GM12878 (cell line): ENCODE measurements at regions of chr4 and their contacts with region 1.

Region 1: DNA sequence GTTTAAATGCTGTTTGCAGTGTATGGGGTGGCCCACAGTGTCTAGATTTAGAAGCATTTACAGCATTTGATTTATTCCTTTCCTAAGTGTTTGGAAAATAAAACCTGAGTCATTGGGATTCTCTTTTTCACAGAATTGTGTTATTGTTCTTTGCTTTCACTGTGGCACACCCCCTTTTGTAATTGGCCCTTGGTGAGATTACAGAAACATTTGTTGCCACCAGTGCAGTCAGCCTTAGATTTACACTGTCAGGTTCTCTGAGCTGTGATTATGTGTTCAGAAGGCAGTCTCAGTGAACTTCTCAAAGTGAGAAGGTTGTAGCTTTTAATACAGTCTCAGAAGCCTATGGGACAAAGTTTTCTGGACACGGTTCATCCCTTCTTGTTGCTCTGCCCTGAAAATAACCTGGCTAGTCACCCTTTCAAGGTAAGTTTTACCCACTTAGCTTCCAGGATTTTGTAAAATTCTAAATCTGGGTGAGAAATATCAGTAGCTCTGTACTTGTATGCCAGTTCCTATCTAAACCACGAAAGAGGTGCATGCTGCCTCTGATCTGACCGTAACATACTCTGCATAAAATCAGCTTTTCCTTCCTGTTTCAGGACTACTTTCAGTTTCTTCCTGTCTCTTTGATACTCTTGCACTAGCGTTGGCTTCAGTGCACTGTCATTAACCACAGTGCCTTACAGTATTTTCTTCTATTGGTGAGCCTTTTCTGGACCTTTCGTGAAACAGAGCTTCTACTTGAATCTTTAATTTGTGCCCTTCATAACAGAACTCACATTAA is 12.6 kb downstream of the RUFY3 start:
- DNase-seq: peak; percentile 74
- ATAC-seq: peak; percentile 92
- H3K4me3 ChIP-seq: peak overlapping the region; percentile 62
- H3K27ac ChIP-seq: peak overlapping the region; percentile 49
- H3K4me1 ChIP-seq: peaks cover 30% of the 10 kb centered on the region
- H3K27me3 ChIP-seq: no peaks in the 10 kb centered on the region
- CTCF ChIP-seq: no peak
- EP300 ChIP-seq: 0 out of 4 replicates have a peak, but pooled peaks have one; percentile 1 to 14
- POLR2A ChIP-seq: no peak; the same call in 1 of the 2 replicates
- RAD21 ChIP-seq: no peak

Region 2: DNA sequence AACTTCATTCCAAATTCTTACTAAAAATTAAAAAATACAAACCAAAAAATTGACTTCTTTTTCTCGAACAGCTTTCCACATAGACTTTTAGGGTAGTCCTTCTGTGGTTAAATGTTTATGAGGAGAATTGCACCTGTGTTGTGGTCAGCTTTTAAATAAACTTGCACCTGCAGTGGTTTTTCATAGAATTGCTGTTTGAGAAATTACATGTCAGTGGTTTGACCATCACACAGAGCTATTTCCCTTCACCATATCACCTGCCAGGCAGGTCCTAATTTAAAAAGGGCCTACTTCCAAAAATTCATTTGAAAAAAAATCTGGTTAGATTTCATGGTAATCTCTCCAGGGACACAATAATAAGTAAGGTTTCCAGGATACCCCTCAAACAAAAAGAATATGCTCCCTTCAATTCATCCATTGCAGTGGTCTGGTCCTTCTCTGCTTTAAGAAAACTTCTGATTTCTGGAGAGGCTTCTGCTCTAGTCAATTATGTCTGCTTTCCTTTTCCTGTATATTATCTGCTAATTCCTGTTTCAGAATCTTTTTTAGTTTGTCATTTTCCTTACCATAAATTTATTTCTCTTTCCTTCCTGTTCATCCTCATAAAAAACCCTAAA is 55.9 kb before region 1 on chr4:
- CTCF ChIA-PET with region 1: interaction called, 15 read pairs
- POLR2A ChIA-PET with region 1: interaction called, 7 read pairs
- RAD21 ChIA-PET with region 1: interaction called, 14 read pairs
- SMC1A ChIA-PET with region 1: interaction called, 7 read pairs
- in situ Hi-C with region 1: no loop called
- intact Hi-C with region 1: no loop called
- DNase-seq: peak; percentile 63
- ATAC-seq: peak; percentile 79
- H3K4me3 ChIP-seq: 0 out of 2 replicates have a peak overlapping the region, but pooled peaks have one; percentile 17
- H3K27ac ChIP-seq: peak overlapping the region; percentile 65
- H3K4me1 ChIP-seq: peaks cover 55% of the 10 kb centered on the region
- H3K27me3 ChIP-seq: no peaks in the 10 kb centered on the region
- CTCF ChIP-seq: no peak
- EP300 ChIP-seq: peak; percentile 87 to 98; a peak in 3 of 4 replicates
- POLR2A ChIP-seq: no peak
- RAD21 ChIP-seq: no peak

Region 3: DNA sequence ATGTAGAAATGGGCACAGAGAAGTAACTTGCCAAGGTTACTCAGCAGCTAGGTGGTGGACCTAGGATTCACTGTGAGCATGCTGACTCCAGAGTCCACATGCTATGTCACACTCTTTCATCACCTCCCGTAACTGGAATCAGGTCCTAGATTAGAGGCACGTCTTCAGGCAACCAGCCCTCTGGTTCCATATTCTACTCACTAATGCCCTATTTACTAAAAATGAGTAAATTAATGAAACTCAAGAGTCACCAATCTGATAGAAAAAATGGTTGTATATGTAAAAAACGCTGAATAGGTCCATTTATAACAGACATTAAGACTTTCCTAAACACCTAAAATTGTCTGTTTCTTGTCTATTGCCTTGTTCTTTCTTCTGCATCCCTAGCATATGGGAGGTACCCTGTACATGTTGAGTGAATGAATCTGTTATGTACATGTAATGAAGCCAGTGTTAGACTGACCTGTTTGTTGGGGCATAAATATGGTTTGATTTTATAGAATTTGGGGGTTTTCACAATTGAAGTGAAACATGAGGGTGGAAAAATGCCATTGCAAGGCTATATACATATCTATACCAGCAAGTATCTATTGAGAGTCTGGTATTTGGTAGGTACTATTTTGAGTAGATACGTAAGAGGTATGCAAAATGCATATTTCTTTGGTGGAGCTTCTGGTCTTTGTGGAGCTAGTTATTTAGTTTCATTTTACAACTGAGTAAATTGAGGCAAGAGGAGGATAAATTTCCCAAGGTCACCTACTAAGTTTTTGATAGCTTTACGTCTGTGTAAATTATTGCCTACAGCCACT is 20.1 kb before region 1 on chr4:
- CTCF ChIA-PET with region 1: interaction called, 77 read pairs
- POLR2A ChIA-PET with region 1: interaction called, 5 read pairs
- RAD21 ChIA-PET with region 1: interaction called, 43 read pairs
- SMC1A ChIA-PET with region 1: interaction called, 65 read pairs
- in situ Hi-C with region 1: no loop called
- intact Hi-C with region 1: no loop called
- DNase-seq: no peak
- ATAC-seq: peak; percentile 77
- H3K4me3 ChIP-seq: peak overlapping the region; percentile 13; the same call in 1 of the 2 replicates
- H3K27ac ChIP-seq: peak overlapping the region; percentile 72
- H3K4me1 ChIP-seq: peaks cover 33% of the 10 kb centered on the region
- H3K27me3 ChIP-seq: no peaks in the 10 kb centered on the region
- CTCF ChIP-seq: no peak
- EP300 ChIP-seq: no peak
- POLR2A ChIP-seq: no peak
- RAD21 ChIP-seq: no peak

Region 4: DNA sequence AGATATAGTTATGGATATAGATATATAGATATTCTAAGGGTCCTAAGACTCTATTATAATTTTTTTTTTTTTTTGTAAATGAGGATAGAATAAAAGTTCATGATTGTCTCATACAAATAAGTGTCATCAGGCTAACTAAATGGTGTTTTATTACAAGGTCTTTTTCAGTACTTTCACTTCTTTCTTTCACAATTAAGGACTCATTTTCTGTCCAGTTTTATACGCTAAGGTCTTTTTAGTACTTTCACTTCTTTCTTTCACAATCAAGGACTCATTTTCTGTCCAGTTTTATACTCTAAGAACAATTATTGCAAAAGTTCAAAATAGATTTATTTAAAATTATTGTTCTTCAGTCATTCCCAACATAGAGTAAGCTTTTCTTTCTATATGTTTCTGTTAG is 20.1 kb after region 1 on chr4:
- CTCF ChIA-PET with region 1: interaction called, 55 read pairs
- POLR2A ChIA-PET with region 1: interaction called, 24 read pairs
- RAD21 ChIA-PET with region 1: interaction called, 86 read pairs
- SMC1A ChIA-PET with region 1: interaction called, 204 read pairs
- in situ Hi-C with region 1: no loop called
- intact Hi-C with region 1: loop called (anchors 2 kb)
- DNase-seq: no peak
- ATAC-seq: peak; percentile 82
- H3K4me3 ChIP-seq: peak overlapping the region; percentile 59; the same call in 1 of the 2 replicates
- H3K27ac ChIP-seq: peak overlapping the region; percentile 79
- H3K4me1 ChIP-seq: peaks cover 36% of the 10 kb centered on the region
- H3K27me3 ChIP-seq: no peaks in the 10 kb centered on the region
- CTCF ChIP-seq: no peak
- EP300 ChIP-seq: peak; percentile 49 to 85; a peak in 3 of 4 replicates
- POLR2A ChIP-seq: no peak
- RAD21 ChIP-seq: no peak

Region 5: GRCh38 chr4:70801265-70801809 is 67.0 kb after region 1 on chr4:
- CTCF ChIA-PET with region 1: interaction called, 5 read pairs
- POLR2A ChIA-PET with region 1: interaction called, 4 read pairs
- RAD21 ChIA-PET with region 1: no interaction called
- SMC1A ChIA-PET with region 1: interaction called, 18 read pairs
- in situ Hi-C with region 1: no loop called
- intact Hi-C with region 1: no loop called
- DNase-seq: no peak
- ATAC-seq: peak; percentile 53
- H3K4me3 ChIP-seq: no peak overlapping the region
- H3K27ac ChIP-seq: no peak overlapping the region
- H3K4me1 ChIP-seq: no peaks in the 10 kb centered on the region
- H3K27me3 ChIP-seq: no peaks in the 10 kb centered on the region
- CTCF ChIP-seq: no peak
- EP300 ChIP-seq: no peak
- POLR2A ChIP-seq: no peak
- RAD21 ChIP-seq: no peak

Region 6: DNA sequence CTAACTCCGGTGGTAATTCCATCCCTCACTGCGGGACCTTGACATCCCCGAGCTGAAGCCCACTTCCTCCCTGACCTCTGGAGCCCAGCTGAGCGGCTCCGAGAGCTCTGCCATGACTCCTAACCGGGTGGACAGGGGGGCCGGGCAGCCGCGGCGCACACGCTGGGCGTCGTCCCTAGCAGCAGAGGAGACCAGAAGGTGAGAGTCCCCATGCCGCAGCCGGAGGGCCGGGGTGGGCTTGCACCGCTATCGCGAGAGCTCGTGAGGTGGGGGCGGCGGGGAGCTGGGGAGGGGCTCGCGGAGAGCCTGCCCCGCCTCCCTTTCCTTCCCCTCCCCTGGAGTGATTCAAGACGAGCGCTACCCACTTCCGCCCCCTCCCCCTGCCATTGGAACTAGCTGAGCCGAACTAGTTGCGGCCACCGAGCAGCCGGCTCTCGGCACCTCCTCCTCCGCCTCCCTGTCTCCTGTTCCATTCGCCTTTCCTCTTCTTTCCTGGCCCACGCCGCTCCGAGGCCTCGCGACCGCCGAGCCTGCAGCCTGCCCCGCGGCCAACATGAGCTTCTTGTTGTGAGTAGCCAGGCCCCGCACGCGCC is 167.7 kb after region 1 on chr4 and contains the start of gene MOB1B:
- CTCF ChIA-PET with region 1: interaction called, 11 read pairs
- POLR2A ChIA-PET with region 1: no interaction called
- RAD21 ChIA-PET with region 1: interaction called, 13 read pairs
- SMC1A ChIA-PET with region 1: interaction called, 6 read pairs
- in situ Hi-C with region 1: no loop called
- intact Hi-C with region 1: no loop called
- DNase-seq: peak; percentile 34
- ATAC-seq: peak; percentile 94
- H3K4me3 ChIP-seq: peak within 1 kb of the TSS; percentile 99
- H3K27ac ChIP-seq: peak within 1 kb of the TSS; percentile 53
- H3K4me1 ChIP-seq: no peaks in the 10 kb centered on the region
- H3K27me3 ChIP-seq: no peaks in the 10 kb centered on the region
- CTCF ChIP-seq: peak; percentile 23 to 49 (median 41); a peak in 4 of 6 replicates
- EP300 ChIP-seq: no peak
- POLR2A ChIP-seq: peak; percentile 83
- RAD21 ChIP-seq: peak; percentile 51
- polyA plus RNA-seq, gene MOB1B: 1.9 TPM

Region 7: DNA sequence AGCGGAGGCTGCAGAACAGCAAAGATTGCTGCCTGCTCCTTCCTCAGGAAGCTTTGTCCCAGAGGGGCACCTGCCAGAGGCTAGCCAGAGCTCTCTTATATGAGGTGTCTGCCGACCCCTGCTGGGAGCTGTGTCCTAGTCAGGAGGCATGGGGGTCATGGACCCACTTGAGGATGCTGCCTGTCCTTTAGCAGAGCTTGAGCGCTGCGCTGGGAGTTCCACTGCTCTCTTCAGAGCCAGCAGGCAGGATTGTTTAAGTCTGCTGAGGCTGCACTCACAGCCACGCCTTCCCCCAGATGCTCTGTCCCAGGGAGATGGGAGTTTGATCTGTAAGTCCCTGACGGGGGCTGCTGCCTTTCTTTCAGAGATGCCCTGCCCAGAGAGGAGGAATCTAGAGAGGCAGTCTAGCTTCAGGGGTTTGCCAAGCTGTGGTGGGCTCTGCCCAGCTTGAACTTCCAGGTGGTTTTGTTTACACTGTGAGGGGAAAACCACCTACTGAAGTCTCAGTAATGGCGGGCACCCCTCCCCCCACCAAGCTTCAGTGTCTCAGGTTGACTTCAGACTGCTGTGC is 270.0 kb after region 1 on chr4:
- CTCF ChIA-PET with region 1: interaction called, 28 read pairs
- POLR2A ChIA-PET with region 1: no interaction called
- RAD21 ChIA-PET with region 1: interaction called, 18 read pairs
- SMC1A ChIA-PET with region 1: interaction called, 10 read pairs
- in situ Hi-C with region 1: no loop called
- intact Hi-C with region 1: no loop called
- DNase-seq: no peak
- ATAC-seq: peak; percentile 74
- H3K4me3 ChIP-seq: peak overlapping the region; percentile 45; the same call in 1 of the 2 replicates
- H3K27ac ChIP-seq: peak overlapping the region; percentile 24; the same call in 1 of the 2 replicates
- H3K4me1 ChIP-seq: peaks cover 9% of the 10 kb centered on the region
- H3K27me3 ChIP-seq: no peaks in the 10 kb centered on the region
- CTCF ChIP-seq: peak in 1 of 3 experiments; percentile 26; a peak in 1 of 6 replicates
- EP300 ChIP-seq: no peak
- POLR2A ChIP-seq: no peak
- RAD21 ChIP-seq: peak; percentile 47

Region 8: GRCh38 chr4:71231129-71232055 is 497.0 kb after region 1 on chr4:
- CTCF ChIA-PET with region 1: no interaction called
- POLR2A ChIA-PET with region 1: no interaction called
- RAD21 ChIA-PET with region 1: no interaction called
- SMC1A ChIA-PET with region 1: no interaction called
- in situ Hi-C with region 1: no loop called
- intact Hi-C with region 1: no loop called
- DNase-seq: no peak
- ATAC-seq: peak; percentile 14; the same call in 2 of the 3 replicates
- H3K4me3 ChIP-seq: no peak overlapping the region
- H3K27ac ChIP-seq: no peak overlapping the region
- H3K4me1 ChIP-seq: no peaks in the 10 kb centered on the region
- H3K27me3 ChIP-seq: peaks cover 0 to 2% of the 10 kb centered on the region in 2 experiments; a peak in 2 of 4 replicates
- CTCF ChIP-seq: no peak
- EP300 ChIP-seq: no peak
- POLR2A ChIP-seq: no peak
- RAD21 ChIP-seq: no peak